Mammary epithelial cell (primary cell): ENCODE measurements at regions of chr7 and their contacts with region 1.

Region 1: GRCh38 chr7:77759294-77759889 is 38.8 kb downstream of the TMEM60 start:
- DNase-seq: peak; percentile 39
- H3K4me3 ChIP-seq: no peak overlapping the region
- H3K27ac ChIP-seq: no peak overlapping the region
- H3K4me1 ChIP-seq: no peaks in the 10 kb centered on the region
- H3K27me3 ChIP-seq: no peaks in the 10 kb centered on the region
- CTCF ChIP-seq: peak; percentile 70 to 76

Region 2: GRCh38 chr7:77439572-77439971 is 319.8 kb before region 1 on chr7:
- CTCF ChIA-PET with region 1: no interaction called
- dilution Hi-C with region 1: no loop called
- in situ Hi-C with region 1: no loop called
- intact Hi-C with region 1: loop called (anchors 2 kb)
- DNase-seq: peak; percentile 56
- H3K4me3 ChIP-seq: no peak overlapping the region
- H3K27ac ChIP-seq: no peak overlapping the region
- H3K4me1 ChIP-seq: peaks cover 32% of the 10 kb centered on the region
- H3K27me3 ChIP-seq: no peaks in the 10 kb centered on the region
- CTCF ChIP-seq: peak; percentile 55 to 74

Region 3: GRCh38 chr7:77516085-77516484 is 243.3 kb before region 1 on chr7:
- CTCF ChIA-PET with region 1: no interaction called
- dilution Hi-C with region 1: no loop called
- in situ Hi-C with region 1: no loop called
- intact Hi-C with region 1: no loop called
- DNase-seq: no peak
- H3K4me3 ChIP-seq: no peak overlapping the region
- H3K27ac ChIP-seq: no peak overlapping the region
- H3K4me1 ChIP-seq: no peaks in the 10 kb centered on the region
- H3K27me3 ChIP-seq: no peaks in the 10 kb centered on the region
- CTCF ChIP-seq: no peak

Region 4: DNA sequence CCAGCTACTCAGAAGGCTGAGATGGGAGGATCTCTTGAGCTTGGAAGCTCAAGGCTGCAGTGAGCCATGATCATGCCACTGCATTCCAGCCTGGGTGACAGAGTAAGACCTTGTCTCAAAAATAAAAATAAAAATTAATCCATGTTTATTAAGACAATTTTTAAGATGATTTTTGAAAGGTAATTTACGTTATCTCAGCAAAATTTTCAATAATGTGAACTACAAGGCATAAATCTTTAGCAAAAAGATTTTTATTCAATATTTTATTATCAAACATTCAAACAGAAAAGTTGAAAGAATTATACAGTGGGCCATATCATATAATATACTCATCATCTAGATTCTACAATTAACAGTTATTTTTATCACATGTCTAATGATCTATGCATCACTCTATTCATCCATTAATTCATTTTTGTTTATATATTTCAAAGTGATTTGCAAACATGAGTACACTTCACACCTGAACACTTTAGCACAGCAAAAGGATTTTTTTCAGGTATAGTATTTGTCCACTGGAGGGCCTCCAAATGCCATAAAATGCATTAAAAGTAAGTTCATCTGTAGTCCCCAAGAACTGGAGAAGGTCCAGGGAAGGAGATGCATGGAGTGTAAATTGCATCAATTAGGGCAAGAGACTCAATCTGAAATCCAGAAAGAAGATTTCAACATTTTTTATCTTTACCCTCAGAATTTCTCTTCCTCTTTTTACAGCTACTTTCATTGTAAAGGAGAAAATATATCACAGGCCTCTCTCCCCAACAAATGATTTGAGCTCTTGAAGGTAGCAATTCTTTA is 101.8 kb before region 1 on chr7:
- CTCF ChIA-PET with region 1: interaction called, 4 read pairs
- dilution Hi-C with region 1: no loop called
- in situ Hi-C with region 1: loop called (anchors 5 to 10 kb)
- intact Hi-C with region 1: loop called (anchors 1 kb)
- DNase-seq: peak; percentile 24
- H3K4me3 ChIP-seq: no peak overlapping the region
- H3K27ac ChIP-seq: no peak overlapping the region
- H3K4me1 ChIP-seq: no peaks in the 10 kb centered on the region
- H3K27me3 ChIP-seq: no peaks in the 10 kb centered on the region
- CTCF ChIP-seq: peak; percentile 38 to 57

Region 5: GRCh38 chr7:77667459-77668086 is 91.8 kb before region 1 on chr7:
- CTCF ChIA-PET with region 1: no interaction called
- dilution Hi-C with region 1: no loop called
- in situ Hi-C with region 1: loop called in 1 of 2 experiments (anchors 10 kb)
- intact Hi-C with region 1: no loop called
- DNase-seq: no peak
- H3K4me3 ChIP-seq: no peak overlapping the region
- H3K27ac ChIP-seq: no peak overlapping the region
- H3K4me1 ChIP-seq: peaks cover 19% of the 10 kb centered on the region
- H3K27me3 ChIP-seq: no peaks in the 10 kb centered on the region
- CTCF ChIP-seq: no peak

Region 6: DNA sequence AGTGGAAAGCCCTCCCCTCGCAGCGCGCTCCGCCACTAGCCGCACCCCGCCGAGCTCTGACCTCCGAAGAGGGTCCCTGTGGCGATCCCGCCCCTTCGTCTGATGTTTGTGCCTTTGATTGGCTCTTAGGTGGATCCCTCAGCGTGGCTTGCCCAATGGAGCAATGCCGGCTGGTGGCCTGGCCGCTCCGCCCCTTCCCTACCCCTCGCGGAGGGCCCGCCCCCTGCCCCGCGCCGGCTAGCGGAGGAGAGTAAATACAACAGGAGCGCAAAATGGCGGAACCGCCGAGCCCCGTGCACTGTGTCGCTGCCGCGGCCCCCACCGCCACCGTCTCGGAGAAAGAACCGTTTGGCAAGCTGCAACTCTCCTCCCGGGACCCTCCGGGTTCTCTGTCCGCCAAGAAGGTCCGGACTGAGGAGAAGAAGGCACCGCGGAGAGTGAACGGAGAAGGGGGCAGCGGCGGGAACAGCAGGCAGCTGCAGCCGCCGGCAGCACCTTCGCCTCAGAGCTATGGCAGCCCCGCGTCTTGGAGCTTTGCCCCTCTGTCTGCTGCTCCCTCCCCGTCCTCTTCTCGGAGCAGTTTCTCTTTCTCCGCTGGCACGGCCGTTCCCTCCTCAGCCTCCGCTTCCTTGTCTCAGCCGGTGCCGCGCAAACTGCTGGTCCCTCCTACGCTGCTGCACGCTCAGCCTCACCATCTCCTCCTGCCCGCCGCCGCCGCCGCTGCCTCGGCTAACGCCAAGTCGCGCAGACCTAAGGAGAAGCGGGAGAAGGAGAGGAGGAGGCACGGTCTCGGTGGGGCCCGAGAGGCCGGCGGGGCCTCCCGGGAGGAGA is 63.0 kb before region 1 on chr7 and contains the start of gene RSBN1L:
- CTCF ChIA-PET with region 1: no interaction called
- dilution Hi-C with region 1: no loop called
- in situ Hi-C with region 1: no loop called
- intact Hi-C with region 1: loop called (anchors 2 kb)
- DNase-seq: peak; percentile 96
- H3K4me3 ChIP-seq: peak within 1 kb of the TSS; percentile 51 to 96 (median 95)
- H3K27ac ChIP-seq: peak within 1 kb of the TSS; percentile 61
- H3K4me1 ChIP-seq: no peaks in the 10 kb centered on the region
- H3K27me3 ChIP-seq: no peaks in the 10 kb centered on the region
- CTCF ChIP-seq: peak; percentile 16 to 46
- total RNA-seq, gene RSBN1L: 8.8 to 12.8 TPM